Esophagus squamous epithelium (tissue), 5 donors: ENCODE measurements at regions of chr10 and their contacts with region 1.

Region 1: DNA sequence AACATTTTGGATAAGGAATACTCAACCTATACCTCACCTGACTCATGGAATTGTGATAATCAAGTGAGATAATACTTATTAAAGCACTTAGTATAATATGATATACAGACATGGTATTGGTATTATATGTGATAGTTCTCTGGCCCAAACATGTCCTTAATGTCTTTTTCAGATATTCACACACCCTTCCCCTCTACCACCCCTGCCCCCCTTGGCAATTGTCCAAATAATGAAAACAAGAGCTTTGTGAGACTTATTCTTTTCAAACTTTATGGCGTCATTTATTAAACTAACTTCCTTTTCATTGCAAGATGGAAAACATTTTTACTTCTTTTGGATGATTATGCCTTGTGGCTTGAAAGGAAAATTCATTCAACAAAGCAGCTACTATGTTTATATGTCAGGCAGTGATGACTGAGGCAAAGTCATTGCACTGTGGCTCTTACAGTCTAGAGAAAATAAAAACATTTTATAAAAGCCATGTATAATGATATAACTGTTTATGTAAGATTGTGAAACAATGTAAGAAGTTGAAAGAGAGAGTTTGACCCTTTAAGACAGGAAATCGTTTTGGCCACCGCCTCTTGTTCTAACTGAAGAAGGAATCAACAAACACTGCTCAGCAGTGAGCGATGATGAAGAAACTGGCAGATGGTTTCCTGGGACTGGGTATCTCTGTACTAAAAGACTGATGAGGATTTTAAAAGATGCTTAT is 27.4 kb downstream of the MINPP1 start:
- DNase-seq: no peak
- H3K4me3 ChIP-seq: no peak overlapping the region
- H3K27ac ChIP-seq: peak overlapping the region in 3 of 4 donors; percentile 60 to 72 (median 64)
- H3K4me1 ChIP-seq: peaks cover 0 to 18% (median 0%) of the 10 kb centered on the region in 3 donors
- H3K27me3 ChIP-seq: no peaks in the 10 kb centered on the region
- CTCF ChIP-seq: no peak
- POLR2A ChIP-seq: no peak

Region 2: GRCh38 chr10:86436963-86437362 is 1095.1 kb before region 1 on chr10:
- intact Hi-C with region 1: no loop called
- DNase-seq: no peak
- H3K4me3 ChIP-seq: no peak overlapping the region
- H3K27ac ChIP-seq: no peak overlapping the region
- H3K4me1 ChIP-seq: peaks cover 0 to 4% (median 0%) of the 10 kb centered on the region in 3 donors
- H3K27me3 ChIP-seq: no peaks in the 10 kb centered on the region
- CTCF ChIP-seq: no peak
- POLR2A ChIP-seq: no peak

Region 3: GRCh38 chr10:87659571-87660483 is 127.8 kb after region 1 on chr10 and contains the start of gene PAPSS2:
- intact Hi-C with region 1: loop called (anchors 10 kb)
- DNase-seq: no peak
- H3K4me3 ChIP-seq: peak within 1 kb of the TSS; percentile 59 to 88 (median 75)
- H3K27ac ChIP-seq: peak within 1 kb of the TSS; percentile 65 to 86 (median 80)
- H3K4me1 ChIP-seq: peaks cover 11 to 43% (median 14%) of the 10 kb centered on the region in 3 donors
- H3K27me3 ChIP-seq: peaks cover 0 to 21% (median 3%) of the 10 kb centered on the region in 4 donors
- CTCF ChIP-seq: no peak
- POLR2A ChIP-seq: peak in 2 of 4 donors; percentile 26 to 49
- total RNA-seq, gene PAPSS2: 1.8 to 13.3 (median 11.0) TPM

Region 4: DNA sequence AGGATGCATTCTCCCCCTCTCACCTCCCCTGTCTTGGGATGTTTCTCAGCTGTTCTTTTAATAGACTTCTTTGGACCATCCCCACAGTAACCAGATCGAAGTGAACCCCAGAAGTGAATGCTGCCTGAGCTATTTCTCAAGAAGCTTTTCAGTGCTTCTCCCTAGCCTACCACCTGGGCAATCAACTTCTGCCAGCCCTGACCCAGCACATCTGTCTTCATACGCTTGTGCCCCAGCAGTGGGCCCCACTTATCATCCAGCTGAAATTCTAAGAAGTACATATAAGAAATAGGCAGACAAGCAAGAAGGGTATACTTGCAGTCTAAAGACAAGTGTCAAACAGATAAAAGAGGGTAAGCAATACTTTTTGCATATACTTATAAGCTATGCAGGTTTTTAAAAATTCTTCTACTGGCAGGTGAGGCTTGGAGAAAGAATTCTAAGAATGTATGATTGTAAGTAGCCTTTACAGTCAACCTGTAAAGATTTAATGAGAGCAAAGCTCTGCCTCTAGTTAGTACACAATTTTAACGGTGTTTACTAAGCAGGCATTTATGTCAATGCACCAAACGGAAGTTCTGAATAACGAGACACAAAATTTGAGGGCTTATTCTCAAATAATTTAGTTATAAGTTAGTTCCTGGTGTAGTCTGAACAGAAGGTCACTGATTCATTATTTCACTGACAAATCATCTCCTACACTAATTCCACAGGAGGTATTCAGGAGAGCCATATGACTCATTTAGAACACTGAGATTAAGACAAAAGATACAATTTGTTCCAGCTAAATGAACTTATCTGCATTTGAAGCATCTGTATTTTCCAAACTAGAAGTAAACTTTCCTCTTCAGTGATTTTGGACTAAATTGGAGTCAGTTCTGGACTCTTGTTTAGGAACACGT is 967.8 kb after region 1 on chr10:
- intact Hi-C with region 1: no loop called
- DNase-seq: no peak
- H3K4me3 ChIP-seq: no peak overlapping the region
- H3K27ac ChIP-seq: no peak overlapping the region
- H3K4me1 ChIP-seq: peaks cover 0 to 7% (median 0%) of the 10 kb centered on the region in 3 donors
- H3K27me3 ChIP-seq: no peaks in the 10 kb centered on the region
- CTCF ChIP-seq: no peak
- POLR2A ChIP-seq: no peak